ENCODE measurements at regions of chr7 and their contacts with region 1.

Region 1: DNA sequence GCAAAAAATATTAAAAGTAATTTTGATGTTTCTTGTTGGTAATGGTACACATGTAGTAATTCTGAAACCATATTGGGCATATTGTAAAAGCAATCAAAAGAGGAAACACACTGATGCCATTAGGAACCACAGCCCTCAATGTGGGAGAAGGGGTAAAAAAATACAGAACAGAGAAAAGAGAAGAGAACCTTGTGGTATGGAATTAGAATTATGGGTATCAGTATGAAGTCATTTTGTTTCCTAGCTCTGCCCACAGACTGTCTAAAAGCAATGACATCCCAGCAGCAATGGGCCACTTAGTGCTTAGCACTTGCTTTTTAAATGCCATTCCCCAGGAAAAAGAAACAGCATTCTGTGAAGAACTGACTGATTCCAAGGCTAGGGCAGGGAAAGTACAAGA is 61.5 kb downstream of the CPVL start:
- DNase-seq: no peak
- H3K4me3 Mint-ChIP-seq: no peak overlapping the region
- H3K27ac Mint-ChIP-seq: no peak overlapping the region
- H3K4me1 Mint-ChIP-seq: peaks cover 17% of the 10 kb centered on the region
- H3K27me3 Mint-ChIP-seq: peaks cover 5% of the 10 kb centered on the region

Region 2: DNA sequence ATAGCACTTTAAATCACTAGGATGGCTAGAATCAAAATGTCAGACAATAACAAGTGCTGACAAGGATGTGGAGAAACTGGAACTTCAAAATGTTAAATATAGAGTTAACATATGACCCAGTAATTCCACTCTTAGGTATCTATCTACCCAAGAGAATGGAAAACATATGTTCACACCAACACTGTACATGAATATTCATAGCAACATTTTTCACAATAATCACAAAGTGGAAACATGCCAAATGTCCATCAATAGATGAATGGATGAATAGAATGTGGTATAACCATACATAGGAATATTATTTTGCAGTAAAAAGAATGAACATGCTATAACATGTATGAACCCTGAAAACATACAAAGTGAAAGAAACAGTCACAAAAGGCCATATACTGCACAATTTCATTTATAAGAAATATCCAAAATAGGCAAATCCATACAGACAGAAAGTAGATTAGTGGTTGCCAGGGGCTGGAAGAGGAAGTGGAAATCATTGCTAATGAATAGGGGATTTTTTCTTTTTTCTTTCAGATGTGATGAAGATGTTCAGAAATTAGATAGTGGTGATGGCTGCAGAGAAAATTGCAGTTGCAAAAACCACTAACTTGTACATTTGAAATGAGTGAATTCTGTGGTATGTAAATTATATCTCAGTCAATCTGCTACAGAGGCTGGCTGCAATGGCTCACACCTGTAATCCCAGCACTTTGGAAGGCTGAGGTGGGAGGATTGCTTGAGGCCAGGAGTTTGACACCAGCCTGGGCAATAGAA is 31.5 kb before region 1 on chr7:
- intact Hi-C with region 1: loop called (anchors 1 kb)
- DNase-seq: no peak
- H3K4me3 Mint-ChIP-seq: no peak overlapping the region
- H3K27ac Mint-ChIP-seq: peak overlapping the region; percentile 2
- H3K4me1 Mint-ChIP-seq: no peaks in the 10 kb centered on the region
- H3K27me3 Mint-ChIP-seq: no peaks in the 10 kb centered on the region

Region 3: GRCh38 chr7:29105752-29106668 is 21.2 kb after region 1 on chr7:
- intact Hi-C with region 1: no loop called
- DNase-seq: peak; percentile 8
- H3K4me3 Mint-ChIP-seq: no peak overlapping the region
- H3K27ac Mint-ChIP-seq: no peak overlapping the region
- H3K4me1 Mint-ChIP-seq: peaks cover 7% of the 10 kb centered on the region
- H3K27me3 Mint-ChIP-seq: peaks cover 15% of the 10 kb centered on the region